ENCODE measurements at regions of chr14 and their contacts with region 1.

Region 1: DNA sequence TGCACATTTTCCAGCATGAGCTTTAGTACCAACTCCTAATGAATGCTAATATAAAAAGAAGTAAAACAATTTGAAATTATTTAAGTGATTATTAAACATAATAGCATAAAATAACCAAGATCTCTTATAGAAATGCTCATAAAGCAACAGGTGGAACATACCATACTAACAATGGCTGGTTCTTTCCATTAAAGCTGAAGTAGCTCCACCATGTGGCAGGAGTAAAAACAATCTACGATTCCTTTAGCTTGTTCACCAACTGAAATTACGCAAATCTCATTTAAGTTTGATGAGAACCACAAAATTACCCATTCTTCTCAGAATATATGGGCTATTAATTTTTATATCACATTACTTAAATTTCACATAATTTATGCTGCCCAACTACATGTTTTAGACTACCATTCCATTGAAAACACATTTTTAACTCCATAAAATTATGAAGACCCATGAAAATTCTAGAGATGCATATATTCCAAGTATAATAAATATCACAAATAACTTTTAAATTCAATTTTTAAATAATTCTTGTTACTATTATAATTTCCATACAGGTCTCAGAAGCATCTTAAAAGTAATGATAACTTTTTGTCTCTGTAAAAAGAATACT is 213.6 kb downstream of the DAD1 start:
- H3K4me3 ChIP-seq: no peak overlapping the region
- H3K27ac ChIP-seq: no peak overlapping the region
- H3K4me1 ChIP-seq: no peaks in the 10 kb centered on the region
- CTCF ChIP-seq: no peak

Region 2: DNA sequence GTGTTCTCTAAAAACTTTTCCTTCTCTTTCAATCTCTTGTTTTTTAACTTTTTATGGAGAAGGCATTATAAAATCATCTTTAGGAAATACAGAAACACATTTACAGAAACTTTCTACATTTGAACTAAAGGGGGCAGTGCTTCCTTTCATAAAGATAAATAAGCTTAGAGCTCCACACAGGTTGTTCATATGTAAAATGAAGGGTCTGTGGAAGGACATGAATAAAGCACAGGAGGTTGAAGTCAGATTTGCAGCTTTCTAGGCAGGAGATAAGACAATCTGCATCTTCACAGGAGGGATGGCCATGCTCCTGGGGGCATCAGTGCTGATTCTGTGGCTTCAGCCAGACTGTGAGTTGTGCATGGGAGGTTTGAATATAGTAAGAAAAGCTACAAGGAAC is 212.4 kb before region 1 on chr14:
- CTCF ChIA-PET with region 1: interaction called, 11 read pairs
- POLR2A ChIA-PET with region 1: no interaction called
- H3K4me3 ChIP-seq: no peak overlapping the region
- H3K27ac ChIP-seq: no peak overlapping the region
- H3K4me1 ChIP-seq: no peaks in the 10 kb centered on the region
- CTCF ChIP-seq: no peak

Region 3: GRCh38 chr14:22200977-22201605 is 174.3 kb before region 1 on chr14:
- CTCF ChIA-PET with region 1: interaction called, 13 read pairs
- POLR2A ChIA-PET with region 1: no interaction called
- H3K4me3 ChIP-seq: no peak overlapping the region
- H3K27ac ChIP-seq: no peak overlapping the region
- H3K4me1 ChIP-seq: no peaks in the 10 kb centered on the region
- CTCF ChIP-seq: no peak

Region 4: GRCh38 chr14:22226381-22226780 is 149.0 kb before region 1 on chr14:
- CTCF ChIA-PET with region 1: interaction called, 17 read pairs
- POLR2A ChIA-PET with region 1: no interaction called
- H3K4me3 ChIP-seq: no peak overlapping the region
- H3K27ac ChIP-seq: no peak overlapping the region
- H3K4me1 ChIP-seq: no peaks in the 10 kb centered on the region
- CTCF ChIP-seq: no peak

Region 5: DNA sequence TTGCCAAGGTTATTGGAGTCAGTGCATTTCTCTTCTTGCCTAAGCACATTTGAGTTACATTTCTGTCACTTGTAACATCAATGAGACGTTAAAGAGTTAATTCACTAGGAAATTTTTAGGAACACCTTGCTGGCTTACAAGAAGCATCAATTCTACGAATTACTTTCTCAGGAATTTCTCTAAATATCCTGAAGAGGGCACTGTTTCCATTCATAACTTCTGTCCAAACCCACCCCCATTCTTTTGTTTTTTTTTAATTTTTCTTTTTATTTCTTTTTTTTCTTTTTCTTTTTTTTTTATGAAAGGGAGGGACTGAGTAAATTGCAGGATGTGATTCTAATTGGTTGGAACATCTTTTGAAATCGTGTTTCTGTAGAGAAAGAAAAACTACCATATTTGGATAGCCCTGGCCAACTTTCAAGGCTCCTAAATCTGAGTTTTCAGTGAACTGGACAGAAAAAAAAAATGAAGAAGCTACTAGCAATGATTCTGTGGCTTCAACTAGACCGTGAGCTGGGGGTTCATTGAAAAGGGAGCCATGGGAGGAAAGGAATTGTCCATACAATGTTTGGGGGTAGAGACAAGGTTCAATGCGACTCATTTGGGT is 71.7 kb before region 1 on chr14:
- CTCF ChIA-PET with region 1: interaction called, 10 read pairs
- POLR2A ChIA-PET with region 1: no interaction called
- H3K4me3 ChIP-seq: no peak overlapping the region
- H3K27ac ChIP-seq: no peak overlapping the region
- H3K4me1 ChIP-seq: no peaks in the 10 kb centered on the region
- CTCF ChIP-seq: no peak

Region 6: DNA sequence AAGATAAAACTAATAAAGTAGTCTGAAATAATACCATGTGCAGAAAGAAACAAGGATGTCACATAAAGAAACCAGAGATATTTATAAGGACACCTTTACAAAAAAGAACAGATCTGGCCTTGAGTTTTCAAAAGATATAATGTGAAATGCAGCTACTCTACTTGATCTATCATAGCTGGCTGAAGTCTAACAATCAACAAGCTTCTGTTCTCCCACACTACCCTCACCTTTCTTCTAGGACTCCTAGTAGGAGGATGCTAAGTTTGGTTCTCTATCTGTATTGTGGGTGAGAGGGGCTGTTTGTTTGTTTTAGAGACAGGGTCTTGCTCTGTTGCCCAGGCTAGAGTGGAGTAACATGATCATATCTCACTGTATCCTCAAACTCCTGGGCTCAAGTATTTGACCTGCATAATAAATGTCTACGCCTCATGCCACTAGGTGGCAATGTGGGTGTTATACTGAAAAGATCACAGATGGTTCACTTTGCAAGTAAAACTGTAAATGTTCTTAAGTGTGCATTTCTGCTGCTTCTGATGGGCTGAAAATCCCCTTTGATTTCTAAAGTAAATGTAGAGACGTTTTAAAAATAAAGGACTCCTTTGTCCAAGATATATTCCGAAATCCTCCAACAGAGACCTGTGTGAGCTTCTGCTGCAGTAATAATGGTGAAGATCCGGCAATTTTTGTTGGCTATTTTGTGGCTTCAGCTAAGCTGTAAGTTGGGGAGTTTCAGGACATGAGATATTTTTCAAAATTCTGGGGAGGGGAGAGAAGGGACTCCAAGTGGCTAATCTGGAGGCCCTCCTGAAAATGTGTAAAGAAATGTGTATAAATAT is 55.7 kb before region 1 on chr14:
- CTCF ChIA-PET with region 1: interaction called, 73 read pairs
- POLR2A ChIA-PET with region 1: no interaction called
- H3K4me3 ChIP-seq: no peak overlapping the region
- H3K27ac ChIP-seq: no peak overlapping the region
- H3K4me1 ChIP-seq: no peaks in the 10 kb centered on the region
- CTCF ChIP-seq: peak; percentile 31; the same call in 1 of the 2 replicates

Region 7: GRCh38 chr14:22333422-22334276 is 41.8 kb before region 1 on chr14:
- CTCF ChIA-PET with region 1: interaction called, 11 read pairs
- POLR2A ChIA-PET with region 1: no interaction called
- H3K4me3 ChIP-seq: no peak overlapping the region
- H3K27ac ChIP-seq: no peak overlapping the region
- H3K4me1 ChIP-seq: peaks cover 17% of the 10 kb centered on the region
- CTCF ChIP-seq: no peak

Region 8: GRCh38 chr14:22397221-22397737 is 21.9 kb after region 1 on chr14:
- CTCF ChIA-PET with region 1: no interaction called
- POLR2A ChIA-PET with region 1: no interaction called
- H3K4me3 ChIP-seq: no peak overlapping the region
- H3K27ac ChIP-seq: no peak overlapping the region
- H3K4me1 ChIP-seq: no peaks in the 10 kb centered on the region
- CTCF ChIP-seq: no peak

Region 9: DNA sequence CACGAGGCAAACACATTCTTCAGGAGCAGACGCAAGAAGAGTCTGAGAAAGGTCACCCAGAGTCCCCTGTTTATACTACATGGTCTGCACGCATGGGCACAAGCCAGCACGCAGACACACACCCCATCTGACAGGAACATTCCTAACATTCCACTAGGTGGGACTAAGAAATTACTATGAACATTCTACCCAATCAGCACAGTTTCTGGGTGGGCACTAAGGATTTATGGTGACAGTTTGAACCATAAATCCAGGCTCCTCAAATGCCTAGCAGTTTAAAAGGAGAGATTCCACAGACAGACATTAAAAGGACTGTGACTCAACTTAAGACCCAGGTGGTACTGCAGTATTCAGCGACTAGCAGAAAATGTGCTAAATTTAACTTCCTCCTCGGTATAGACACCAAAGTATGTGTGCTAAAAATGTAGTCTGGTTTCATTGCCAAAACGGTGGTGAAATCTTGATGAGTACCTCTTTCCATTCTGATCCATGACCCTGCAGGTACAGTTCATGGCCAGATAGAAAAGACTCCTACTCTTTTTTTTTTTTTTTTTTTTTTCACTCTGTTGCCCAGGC is 238.9 kb after region 1 on chr14:
- CTCF ChIA-PET with region 1: no interaction called
- POLR2A ChIA-PET with region 1: no interaction called
- H3K4me3 ChIP-seq: no peak overlapping the region
- H3K27ac ChIP-seq: no peak overlapping the region
- H3K4me1 ChIP-seq: 0 out of 2 replicates have a peak, but pooled peaks cover 2% of the 10 kb centered on the region
- CTCF ChIP-seq: no peak

Measured in HEK293 (cell line).